HEK293T (cell line): ENCODE measurements at regions of chr1 and their contacts with region 1.

Region 1: DNA sequence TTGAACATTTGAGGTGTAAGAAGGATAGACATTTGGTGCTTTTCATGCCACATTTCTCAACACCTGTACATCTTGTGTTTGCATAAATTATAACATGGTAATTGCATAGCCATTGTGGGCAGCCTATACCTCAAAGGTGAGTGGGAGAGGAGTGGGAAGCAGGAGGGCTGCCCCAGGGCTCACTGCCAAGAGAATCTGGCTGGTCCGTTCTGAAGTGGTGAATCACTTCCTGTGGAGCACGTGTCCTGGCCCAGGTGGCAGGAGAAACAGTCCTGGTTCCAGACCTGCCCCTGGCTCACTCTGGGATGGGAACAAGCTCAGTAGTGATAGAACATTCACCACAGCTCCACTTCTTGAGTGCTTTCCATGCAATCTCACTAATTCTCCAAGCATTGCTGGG is 11.6 kb upstream of the OLFML2B start:
- DNase-seq: no peak

Region 2: DNA sequence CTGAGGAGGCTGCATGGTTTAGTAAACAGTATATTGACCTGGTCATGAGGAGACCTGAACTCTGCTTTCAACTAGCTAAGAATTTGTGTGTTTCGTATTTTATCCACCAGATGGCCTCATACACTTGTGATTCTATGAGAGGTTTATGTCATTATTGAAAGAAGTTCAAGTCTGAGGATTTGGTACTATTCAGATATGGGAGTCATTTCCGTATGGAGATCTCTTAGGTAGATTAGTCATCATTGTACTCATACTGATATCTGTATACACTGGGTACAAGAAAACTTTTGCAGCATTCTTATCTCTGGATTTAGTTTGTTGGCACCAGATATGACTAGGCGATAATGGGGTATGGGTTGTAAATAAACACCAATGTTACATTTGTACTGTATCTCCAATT is 242.5 kb before region 1 on chr1:
- CTCF ChIA-PET with region 1: interaction called, 62 read pairs
- POLR2A ChIA-PET with region 1: no interaction called
- DNase-seq: peak; percentile 58

Region 3: DNA sequence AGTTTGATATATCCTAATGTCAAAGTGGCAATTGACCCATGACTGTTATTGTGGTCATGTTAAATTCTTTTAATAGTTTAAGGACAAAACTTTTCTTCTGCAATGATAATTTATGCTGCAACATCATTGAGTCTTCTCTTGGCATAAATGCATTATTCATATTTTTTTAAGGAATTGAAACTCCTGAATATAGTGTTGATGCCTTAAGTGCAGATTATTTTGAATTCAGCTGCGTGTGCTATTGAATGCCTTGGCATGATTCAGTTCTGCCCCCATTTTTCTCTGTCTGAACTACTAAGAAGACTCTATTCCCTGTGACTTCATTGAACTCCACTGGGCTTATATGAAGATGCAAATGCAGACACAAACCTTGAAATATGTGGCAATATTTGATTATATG is 11.7 kb after region 1 on chr1:
- CTCF ChIA-PET with region 1: interaction called, 16 read pairs
- POLR2A ChIA-PET with region 1: no interaction called
- DNase-seq: no peak